ENCODE measurements at regions of chr18 and their contacts with region 1.

Region 1: GRCh38 chr18:24488824-24489493 is 28.5 kb downstream of the HRH4 start:
- DNase-seq: peak in 1 of 2 donors; percentile 66
- H3K4me3 ChIP-seq: no peak overlapping the region
- H3K27ac ChIP-seq: no peak overlapping the region
- H3K4me1 ChIP-seq: peaks cover 0 to 10% (median 3%) of the 10 kb centered on the region in 4 donors
- H3K27me3 ChIP-seq: peaks cover 0 to 4% (median 0%) of the 10 kb centered on the region in 3 donors
- CTCF ChIP-seq: peak in 5 of 7 experiments; percentile 62 to 83 (median 75)
- EP300 ChIP-seq: no peak
- POLR2A ChIP-seq: no peak

Region 2: DNA sequence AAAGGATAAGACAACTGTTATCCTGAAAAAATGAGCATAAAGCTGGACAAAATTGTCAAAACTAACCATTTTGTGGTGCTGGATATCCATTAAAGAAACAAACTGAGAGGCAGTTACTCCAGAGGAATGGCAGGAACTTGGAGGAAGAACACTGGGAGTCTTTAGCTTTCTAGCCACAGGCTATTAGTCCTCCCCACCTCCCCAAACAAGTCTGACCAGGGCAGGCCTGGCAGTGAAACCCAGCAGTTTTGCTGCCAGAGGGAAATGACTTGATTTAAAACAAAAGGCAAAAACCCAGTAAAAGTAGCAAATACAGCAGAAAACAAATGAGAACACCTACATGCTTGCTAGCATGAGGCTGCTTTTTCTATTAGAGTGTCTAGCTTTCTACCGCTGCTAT is 126.2 kb before region 1 on chr18:
- intact Hi-C with region 1: loop called (anchors 5 kb)
- DNase-seq: no peak
- H3K4me3 ChIP-seq: no peak overlapping the region
- H3K27ac ChIP-seq: no peak overlapping the region
- H3K4me1 ChIP-seq: peaks cover 0 to 6% (median 3%) of the 10 kb centered on the region in 4 donors
- H3K27me3 ChIP-seq: no peaks in the 10 kb centered on the region
- CTCF ChIP-seq: no peak
- EP300 ChIP-seq: no peak
- POLR2A ChIP-seq: no peak

Region 3: DNA sequence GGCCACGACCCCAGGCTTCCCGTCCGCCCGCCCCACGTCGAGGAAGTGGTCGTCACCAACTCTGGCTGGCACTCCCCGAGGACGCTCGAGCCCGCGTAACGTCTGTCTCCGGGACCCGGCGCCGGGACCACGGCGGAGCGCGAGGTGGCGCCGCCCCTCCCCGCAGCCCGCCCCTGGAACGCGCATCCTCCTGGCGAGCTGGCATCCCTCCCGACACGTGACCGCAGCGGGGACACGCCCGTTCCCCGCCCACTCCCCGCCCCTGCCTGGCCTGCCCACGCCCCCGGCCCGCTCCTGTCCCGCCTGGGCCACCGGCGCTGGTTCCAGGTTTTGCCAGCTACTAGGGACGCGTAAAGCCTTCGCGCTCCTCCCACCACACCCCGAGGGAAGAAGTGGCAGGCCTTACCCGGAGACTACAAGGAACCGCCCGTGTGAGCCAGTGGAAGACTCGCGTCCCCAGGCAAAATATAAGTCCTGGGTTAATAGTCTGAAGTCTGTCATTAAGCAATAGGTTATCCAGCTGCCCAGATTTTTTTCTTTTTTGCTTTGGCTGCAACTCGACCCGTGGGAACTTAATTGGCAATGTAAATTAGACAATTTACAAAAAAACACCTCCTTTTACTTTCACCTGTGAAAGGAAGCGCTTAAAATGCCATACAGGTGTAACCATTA is 91.1 kb before region 1 on chr18 and contains the start of gene OSBPL1A:
- intact Hi-C with region 1: no loop called
- DNase-seq: peak; percentile 96 to 97
- H3K4me3 ChIP-seq: peak within 1 kb of the TSS; percentile 83 to 92 (median 84)
- H3K27ac ChIP-seq: peak within 1 kb of the TSS; percentile 84 to 92 (median 87)
- H3K4me1 ChIP-seq: peaks cover 11 to 24% (median 22%) of the 10 kb centered on the region in 4 donors
- H3K27me3 ChIP-seq: no peaks in the 10 kb centered on the region
- CTCF ChIP-seq: no peak
- EP300 ChIP-seq: no peak
- POLR2A ChIP-seq: no peak
- total RNA-seq, gene OSBPL1A: 32.2 to 129 (median 45.8) TPM